K562 (cell line): ENCODE measurements at regions of chr10 and their contacts with region 1.

Region 1: GRCh38 chr10:15879058-15879457 is 18.8 kb upstream of the MINDY3 start:
- DNase-seq: peak; percentile 40 to 49 (median 46)
- ATAC-seq: peak; percentile 74
- H3K4me3 ChIP-seq: no peak overlapping the region
- H3K27ac ChIP-seq: no peak overlapping the region
- H3K4me1 ChIP-seq: peaks cover 7 to 8% of the 10 kb centered on the region in 2 experiments; a peak in 4 of 5 replicates
- H3K27me3 ChIP-seq: peaks cover 5 to 11% of the 10 kb centered on the region in 2 experiments; a peak in 1 of 5 replicates
- CTCF ChIP-seq: peak; percentile 45 to 79 (median 61); a peak in 5 of 6 replicates
- EP300 ChIP-seq: no peak
- POLR2A ChIP-seq: no peak
- RAD21 ChIP-seq: peak; percentile 87

Region 2: GRCh38 chr10:16817125-16818019 is 938.3 kb after region 1 on chr10 and contains the start of gene RSU1:
- CTCF ChIA-PET with region 1: no interaction called
- POLR2A ChIA-PET with region 1: no interaction called
- in situ Hi-C with region 1: loop called (anchors 25 kb)
- intact Hi-C with region 1: no loop called
- DNase-seq: peak; percentile 94 to 99 (median 96)
- ATAC-seq: peak; percentile 97
- H3K4me3 ChIP-seq: peak within 1 kb of the TSS; percentile 81
- H3K27ac ChIP-seq: peak within 1 kb of the TSS; percentile 87
- H3K4me1 ChIP-seq: peaks cover 7 to 12% of the 10 kb centered on the region in 2 experiments
- H3K27me3 ChIP-seq: no peaks in the 10 kb centered on the region
- CTCF ChIP-seq: no peak
- EP300 ChIP-seq: no peak; the same call in 1 of the 2 replicates
- POLR2A ChIP-seq: peak; percentile 87
- RAD21 ChIP-seq: no peak
- polyA plus RNA-seq, gene RSU1: 60.0 to 67.3 TPM